ENCODE measurements at regions of chr1 and their contacts with region 1.

Region 1: DNA sequence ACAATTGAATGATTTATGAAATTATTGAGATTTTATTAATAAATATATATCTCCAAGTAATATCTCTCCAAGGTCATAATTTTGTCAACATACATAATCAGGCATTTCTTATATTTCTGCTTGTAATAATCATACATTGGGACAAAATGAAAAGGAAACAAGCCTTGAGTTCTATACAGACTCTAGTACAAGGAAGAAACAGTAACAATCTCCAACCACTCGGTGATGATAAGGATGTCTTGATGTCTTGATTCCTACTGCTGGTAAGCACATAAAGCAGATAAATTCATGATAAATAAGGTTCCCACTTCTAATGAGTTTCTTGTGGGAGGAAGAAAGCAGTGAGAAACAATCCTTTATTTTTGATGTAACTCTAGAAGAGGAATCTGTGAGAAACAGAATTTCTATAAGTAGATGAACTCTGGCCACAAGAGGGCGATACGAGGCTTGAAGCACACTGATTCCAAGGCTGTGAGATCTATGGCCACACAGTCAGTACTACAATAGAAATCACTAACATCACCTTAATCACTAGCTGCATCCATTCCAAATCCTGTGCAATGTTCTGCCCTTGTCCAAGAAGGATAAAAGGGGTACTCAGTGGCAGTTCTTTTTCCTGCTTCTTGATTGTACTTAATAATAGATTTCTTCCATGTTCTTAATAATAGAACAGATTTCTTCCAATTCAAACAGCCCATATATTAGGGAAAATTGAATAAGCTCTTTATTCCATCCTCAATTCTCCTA is 41.4 kb upstream of the LRRC8B start:
- DNase-seq: peak; percentile 94
- ATAC-seq: peak; percentile 87
- H3K4me3 Mint-ChIP-seq: no peak overlapping the region
- H3K27ac Mint-ChIP-seq: no peak overlapping the region
- H3K4me1 Mint-ChIP-seq: peaks cover 21% of the 10 kb centered on the region
- H3K27me3 Mint-ChIP-seq: peaks cover 3% of the 10 kb centered on the region
- CTCF ChIP-seq: peak; percentile 85

Region 2: GRCh38 chr1:89465201-89465600 is 18.0 kb before region 1 on chr1:
- CTCF ChIA-PET with region 1: interaction called, 53 read pairs
- POLR2A ChIA-PET with region 1: no interaction called
- intact Hi-C with region 1: no loop called
- DNase-seq: peak; percentile 66
- ATAC-seq: peak; percentile 89
- H3K4me3 Mint-ChIP-seq: no peak overlapping the region
- H3K27ac Mint-ChIP-seq: no peak overlapping the region
- H3K4me1 Mint-ChIP-seq: peaks cover 30% of the 10 kb centered on the region
- H3K27me3 Mint-ChIP-seq: peaks cover 52% of the 10 kb centered on the region
- CTCF ChIP-seq: no peak

Region 3: DNA sequence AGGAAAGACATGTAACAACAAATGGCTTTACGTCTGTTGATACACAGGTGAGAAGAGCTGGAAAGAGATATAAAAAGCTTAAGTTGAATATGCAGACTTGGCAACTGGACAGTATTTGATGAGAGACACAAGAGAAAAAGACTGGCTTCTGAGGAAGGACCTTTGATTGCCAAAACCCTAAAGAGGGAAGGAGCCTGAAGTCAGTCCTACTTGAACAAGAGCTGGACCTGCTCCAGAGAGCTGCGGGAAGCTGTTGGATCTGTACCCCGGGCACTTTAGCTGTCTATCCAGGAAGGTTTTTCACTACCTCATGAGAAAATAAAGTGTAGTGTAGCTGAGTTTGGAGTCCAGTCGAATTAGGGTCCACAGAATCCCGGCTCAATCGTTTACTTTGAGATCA is 16.1 kb after region 1 on chr1:
- CTCF ChIA-PET with region 1: interaction called, 14 read pairs
- POLR2A ChIA-PET with region 1: no interaction called
- intact Hi-C with region 1: no loop called
- DNase-seq: no peak
- ATAC-seq: no peak
- H3K4me3 Mint-ChIP-seq: no peak overlapping the region
- H3K27ac Mint-ChIP-seq: no peak overlapping the region
- H3K4me1 Mint-ChIP-seq: no peaks in the 10 kb centered on the region
- H3K27me3 Mint-ChIP-seq: peaks cover 2% of the 10 kb centered on the region
- CTCF ChIP-seq: no peak

Region 4: GRCh38 chr1:89598450-89599331 is 115.5 kb after region 1 on chr1:
- CTCF ChIA-PET with region 1: interaction called, 58 read pairs
- POLR2A ChIA-PET with region 1: interaction called, 3 read pairs
- intact Hi-C with region 1: loop called (anchors 5 kb)
- DNase-seq: no peak
- ATAC-seq: no peak
- H3K4me3 Mint-ChIP-seq: no peak overlapping the region
- H3K27ac Mint-ChIP-seq: peak overlapping the region; percentile 64
- H3K4me1 Mint-ChIP-seq: peaks cover 81% of the 10 kb centered on the region
- H3K27me3 Mint-ChIP-seq: no peaks in the 10 kb centered on the region
- CTCF ChIP-seq: peak; percentile 95

Region 5: DNA sequence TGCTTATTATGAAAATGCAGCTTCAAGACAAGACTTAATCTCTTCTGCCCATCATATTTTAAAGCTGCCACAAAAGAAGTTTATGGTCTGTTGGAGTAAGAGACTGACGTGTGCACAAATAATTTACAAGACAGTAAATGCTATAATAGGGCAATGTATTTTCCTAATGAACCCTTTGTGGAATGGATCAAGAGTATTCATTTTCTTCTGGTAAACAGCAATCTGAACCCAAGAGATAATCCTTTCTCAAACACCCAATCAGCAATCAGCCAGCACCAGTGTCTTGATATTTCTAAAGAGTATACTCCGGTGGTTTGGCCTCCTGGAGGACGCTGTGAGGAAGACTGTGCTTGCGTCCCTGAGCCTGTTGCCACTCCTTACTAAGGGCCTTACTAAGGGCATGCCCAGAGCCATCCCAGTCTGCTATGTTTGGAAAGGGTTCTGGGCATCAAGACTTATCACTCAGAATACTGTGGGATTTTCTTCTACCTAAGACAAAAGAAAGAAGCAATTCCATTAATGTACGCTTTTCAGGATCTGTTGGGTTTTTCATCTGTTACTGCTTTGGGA is 288.9 kb after region 1 on chr1:
- CTCF ChIA-PET with region 1: interaction called, 40 read pairs
- POLR2A ChIA-PET with region 1: no interaction called
- intact Hi-C with region 1: loop called (anchors 5 kb)
- DNase-seq: no peak
- ATAC-seq: no peak
- H3K4me3 Mint-ChIP-seq: no peak overlapping the region
- H3K27ac Mint-ChIP-seq: no peak overlapping the region
- H3K4me1 Mint-ChIP-seq: peaks cover 15% of the 10 kb centered on the region
- H3K27me3 Mint-ChIP-seq: no peaks in the 10 kb centered on the region
- CTCF ChIP-seq: no peak

Region 6: GRCh38 chr1:89994805-89995597 is 511.8 kb after region 1 on chr1 and contains the start of gene ZNF326:
- CTCF ChIA-PET with region 1: interaction called, 3 read pairs
- POLR2A ChIA-PET with region 1: no interaction called
- intact Hi-C with region 1: loop called (anchors 10 kb)
- DNase-seq: peak; percentile 94
- ATAC-seq: peak; percentile 97
- H3K4me3 Mint-ChIP-seq: peak within 1 kb of the TSS; percentile 96
- H3K27ac Mint-ChIP-seq: peak within 1 kb of the TSS; percentile 94
- H3K4me1 Mint-ChIP-seq: peaks cover 46% of the 10 kb centered on the region
- H3K27me3 Mint-ChIP-seq: peaks cover 2% of the 10 kb centered on the region
- CTCF ChIP-seq: no peak
- total RNA-seq, gene ZNF326: 21.1 to 21.4 TPM